ENCODE measurements at regions of chr3 and their contacts with region 1.

Region 1: DNA sequence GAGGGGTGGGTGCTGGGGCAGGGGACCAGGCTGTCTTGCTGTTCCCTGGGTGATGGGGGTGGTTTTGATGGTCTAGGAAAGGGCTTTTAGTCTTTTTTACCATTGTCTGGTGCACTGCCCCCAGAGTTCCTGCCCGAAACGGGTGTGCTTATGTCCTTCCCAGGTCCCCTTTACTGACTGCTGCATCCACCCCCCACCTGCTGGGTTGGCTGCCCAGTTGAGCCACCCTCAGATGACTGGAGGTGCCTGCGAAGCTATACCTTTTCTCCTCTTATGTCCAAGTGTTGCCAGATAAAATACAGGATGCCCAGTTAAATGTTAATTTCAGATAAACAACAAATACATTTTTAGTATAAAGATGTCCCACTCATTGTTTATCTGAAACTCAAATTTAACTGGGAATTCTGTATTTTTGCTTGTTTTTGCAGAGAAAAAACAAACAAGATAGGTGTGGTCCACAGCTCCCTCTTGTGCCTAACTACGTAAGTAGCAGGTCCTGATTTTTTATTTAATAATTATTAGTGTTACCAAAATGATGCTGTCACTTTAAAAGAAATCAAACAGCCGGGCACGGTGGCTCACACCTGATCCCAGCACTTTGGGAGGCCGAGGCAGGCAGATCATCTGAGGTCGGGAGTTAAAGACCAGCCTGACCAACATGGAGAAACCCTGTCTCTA is 6.1 kb upstream of the RPP14 start:
- DNase-seq: no peak
- ATAC-seq: no peak
- H3K4me3 ChIP-seq: no peak overlapping the region
- H3K27ac ChIP-seq: no peak overlapping the region
- H3K4me1 ChIP-seq: no peaks in the 10 kb centered on the region
- H3K27me3 ChIP-seq: peaks cover 0 to 21% of the 10 kb centered on the region in 2 experiments; a peak in 2 of 5 replicates
- CTCF ChIP-seq: peak; percentile 14 to 48 (median 15); a peak in 3 of 6 replicates
- EP300 ChIP-seq: no peak
- POLR2A ChIP-seq: no peak
- RAD21 ChIP-seq: peak; percentile 52 to 59

Region 2: DNA sequence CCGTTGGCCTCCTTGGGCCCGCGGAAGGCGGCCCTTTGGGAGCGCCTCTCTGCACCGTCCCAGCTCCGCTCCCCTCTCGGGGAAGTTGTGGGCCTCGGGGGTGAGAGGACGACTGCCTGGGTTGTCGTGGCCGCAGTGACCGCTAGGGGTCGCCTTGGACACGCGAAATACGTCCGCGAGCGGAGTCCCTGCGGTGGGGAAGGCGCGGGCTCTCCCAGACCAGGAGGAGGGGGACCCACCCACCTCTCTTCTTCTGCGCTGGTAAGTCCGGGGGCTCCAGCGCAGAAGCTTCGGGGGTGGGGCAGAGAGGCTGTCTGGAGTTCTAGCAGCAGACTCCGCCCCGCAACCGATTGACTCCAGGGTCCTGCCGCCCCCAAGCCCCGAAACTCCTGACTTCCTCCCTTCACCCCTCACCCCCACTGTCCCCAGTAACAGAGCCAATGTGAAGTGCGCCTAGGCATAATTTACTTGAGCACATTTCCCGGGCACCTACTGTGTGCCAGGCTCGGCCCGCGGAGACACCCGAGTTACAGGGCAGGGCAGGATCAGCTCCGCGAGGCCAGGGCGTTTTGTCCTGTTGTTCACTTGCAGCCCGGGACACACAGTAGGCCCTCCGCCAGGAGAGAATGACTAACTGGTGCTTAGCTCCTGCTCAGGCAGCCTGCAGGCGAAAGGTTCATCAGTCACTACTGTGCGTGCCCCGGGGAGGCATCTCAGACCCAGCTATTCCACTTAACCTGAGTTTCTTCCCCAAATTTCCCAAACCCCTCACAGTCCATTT is 122.0 kb before region 1 on chr3:
- CTCF ChIA-PET with region 1: interaction called, 3 read pairs
- POLR2A ChIA-PET with region 1: no interaction called
- in situ Hi-C with region 1: no loop called
- intact Hi-C with region 1: loop called (anchors 1 kb)
- DNase-seq: peak; percentile 76 to 88 (median 78)
- ATAC-seq: peak; percentile 88
- H3K4me3 ChIP-seq: peak overlapping the region; percentile 21; the same call in 1 of the 2 replicates
- H3K27ac ChIP-seq: no peak overlapping the region
- H3K4me1 ChIP-seq: peaks cover 34 to 35% of the 10 kb centered on the region in 2 experiments
- H3K27me3 ChIP-seq: no peaks in the 10 kb centered on the region
- CTCF ChIP-seq: peak; percentile 78
- EP300 ChIP-seq: no peak
- POLR2A ChIP-seq: no peak
- RAD21 ChIP-seq: peak; percentile 44 to 71

Region 3: DNA sequence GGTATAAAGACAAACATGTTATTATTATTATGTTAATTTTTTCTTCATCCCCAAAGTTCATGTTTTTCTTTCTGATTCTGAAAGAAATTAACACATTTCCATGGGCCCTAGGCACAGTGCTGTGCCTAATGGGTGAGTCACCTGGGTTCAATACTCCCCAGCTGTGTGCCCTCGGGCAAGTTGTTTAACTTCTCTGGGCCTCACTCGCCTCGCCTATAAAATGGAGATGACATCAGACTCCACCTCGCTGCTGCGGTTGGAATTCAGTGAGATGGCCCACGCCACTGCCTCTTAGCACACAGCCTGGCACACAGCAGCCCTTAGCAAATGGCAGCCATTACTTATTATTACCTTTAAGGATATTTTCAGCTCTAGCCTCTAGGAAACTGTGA is 111.8 kb before region 1 on chr3:
- CTCF ChIA-PET with region 1: interaction called, 27 read pairs
- POLR2A ChIA-PET with region 1: no interaction called
- in situ Hi-C with region 1: loop called (anchors 5 kb)
- intact Hi-C with region 1: loop called (anchors 1 kb)
- DNase-seq: no peak
- ATAC-seq: no peak
- H3K4me3 ChIP-seq: no peak overlapping the region
- H3K27ac ChIP-seq: no peak overlapping the region
- H3K4me1 ChIP-seq: peaks cover 4 to 16% of the 10 kb centered on the region in 2 experiments
- H3K27me3 ChIP-seq: no peaks in the 10 kb centered on the region
- CTCF ChIP-seq: no peak
- EP300 ChIP-seq: no peak
- POLR2A ChIP-seq: no peak
- RAD21 ChIP-seq: no peak

Region 4: GRCh38 chr3:58237238-58237940 is 62.6 kb before region 1 on chr3 and contains the start of gene ABHD6:
- CTCF ChIA-PET with region 1: no interaction called
- POLR2A ChIA-PET with region 1: no interaction called
- in situ Hi-C with region 1: no loop called
- intact Hi-C with region 1: loop called (anchors 5 kb)
- DNase-seq: peak; percentile 74 to 86 (median 84)
- ATAC-seq: peak; percentile 90
- H3K4me3 ChIP-seq: peak within 1 kb of the TSS; percentile 63
- H3K27ac ChIP-seq: no peak within 1 kb of the TSS; the same call in 2 of the 3 replicates
- H3K4me1 ChIP-seq: peaks cover 16 to 25% of the 10 kb centered on the region in 2 experiments; a peak in 4 of 5 replicates
- H3K27me3 ChIP-seq: no peaks in the 10 kb centered on the region
- CTCF ChIP-seq: peak; percentile 23 to 42 (median 38); a peak in 4 of 6 replicates
- EP300 ChIP-seq: no peak
- POLR2A ChIP-seq: no peak
- RAD21 ChIP-seq: peak; percentile 55
- polyA plus RNA-seq, gene ABHD6: 0.53 to 0.81 TPM

Region 5: DNA sequence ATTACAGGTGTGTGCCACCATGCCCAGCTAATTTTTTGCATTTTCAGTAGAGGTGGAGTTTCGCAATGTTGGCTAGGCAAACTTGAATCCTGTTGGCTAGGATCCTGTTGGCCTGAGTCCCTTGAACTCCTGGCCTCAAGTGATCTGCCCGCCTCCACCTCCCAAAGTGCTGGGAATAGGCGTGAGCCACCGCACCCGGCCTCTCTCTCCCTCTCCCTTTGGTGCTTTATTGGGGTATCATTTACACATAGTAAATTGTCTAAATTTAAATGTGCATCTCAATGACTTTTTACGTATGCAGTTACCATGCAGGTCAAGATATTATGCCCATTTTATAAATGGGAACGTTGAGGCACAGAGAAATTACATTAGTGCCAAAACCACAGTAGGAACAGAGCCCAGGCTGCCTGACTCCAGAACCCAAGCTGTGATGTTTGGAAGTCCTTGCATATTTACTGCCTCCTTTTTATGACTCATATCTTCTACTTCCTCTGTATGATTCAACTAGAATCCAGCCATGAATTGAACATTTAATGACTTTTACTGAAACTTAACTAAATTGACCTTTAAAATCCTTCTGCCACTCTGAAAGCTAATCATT is 28.0 kb before region 1 on chr3:
- CTCF ChIA-PET with region 1: no interaction called
- POLR2A ChIA-PET with region 1: no interaction called
- in situ Hi-C with region 1: no loop called
- intact Hi-C with region 1: no loop called
- DNase-seq: no peak
- ATAC-seq: no peak
- H3K4me3 ChIP-seq: no peak overlapping the region
- H3K27ac ChIP-seq: no peak overlapping the region
- H3K4me1 ChIP-seq: no peaks in the 10 kb centered on the region
- H3K27me3 ChIP-seq: no peaks in the 10 kb centered on the region
- CTCF ChIP-seq: no peak
- EP300 ChIP-seq: no peak
- POLR2A ChIP-seq: no peak
- RAD21 ChIP-seq: no peak

Measured in K562 (cell line).